Aorta (tissue), 5 donors: ENCODE measurements at regions of chr17 and their contacts with region 1.

Region 1: GRCh38 chr17:1658100-1658499 is 8.4 kb upstream of the RILP start:
- DNase-seq: no peak
- ATAC-seq: no peak
- H3K4me3 ChIP-seq: no peak overlapping the region
- H3K27ac ChIP-seq: no peak overlapping the region
- H3K4me1 ChIP-seq: no peaks in the 10 kb centered on the region
- H3K27me3 ChIP-seq: no peaks in the 10 kb centered on the region

Region 2: GRCh38 chr17:1705004-1705403 is 46.9 kb after region 1 on chr17:
- intact Hi-C with region 1: loop called (anchors 2 to 5 kb)
- DNase-seq: no peak
- ATAC-seq: no peak
- H3K4me3 ChIP-seq: no peak overlapping the region
- H3K27ac ChIP-seq: no peak overlapping the region
- H3K4me1 ChIP-seq: no peaks in the 10 kb centered on the region
- H3K27me3 ChIP-seq: no peaks in the 10 kb centered on the region

Region 3: GRCh38 chr17:1746975-1747543 is 89.0 kb after region 1 on chr17:
- intact Hi-C with region 1: no loop called
- DNase-seq: no peak
- ATAC-seq: peak; percentile 24
- H3K4me3 ChIP-seq: no peak overlapping the region
- H3K27ac ChIP-seq: no peak overlapping the region
- H3K4me1 ChIP-seq: no peaks in the 10 kb centered on the region
- H3K27me3 ChIP-seq: no peaks in the 10 kb centered on the region

Region 4: GRCh38 chr17:1878419-1879121 is 220.5 kb after region 1 on chr17:
- intact Hi-C with region 1: loop called in 1 of 2 experiments (anchors 10 kb)
- DNase-seq: no peak
- ATAC-seq: no peak
- H3K4me3 ChIP-seq: no peak overlapping the region
- H3K27ac ChIP-seq: no peak overlapping the region
- H3K4me1 ChIP-seq: no peaks in the 10 kb centered on the region
- H3K27me3 ChIP-seq: no peaks in the 10 kb centered on the region